CD4-positive, alpha-beta T cell (primary cell): ENCODE measurements at regions of chr14 and their contacts with region 1.

Region 1: DNA sequence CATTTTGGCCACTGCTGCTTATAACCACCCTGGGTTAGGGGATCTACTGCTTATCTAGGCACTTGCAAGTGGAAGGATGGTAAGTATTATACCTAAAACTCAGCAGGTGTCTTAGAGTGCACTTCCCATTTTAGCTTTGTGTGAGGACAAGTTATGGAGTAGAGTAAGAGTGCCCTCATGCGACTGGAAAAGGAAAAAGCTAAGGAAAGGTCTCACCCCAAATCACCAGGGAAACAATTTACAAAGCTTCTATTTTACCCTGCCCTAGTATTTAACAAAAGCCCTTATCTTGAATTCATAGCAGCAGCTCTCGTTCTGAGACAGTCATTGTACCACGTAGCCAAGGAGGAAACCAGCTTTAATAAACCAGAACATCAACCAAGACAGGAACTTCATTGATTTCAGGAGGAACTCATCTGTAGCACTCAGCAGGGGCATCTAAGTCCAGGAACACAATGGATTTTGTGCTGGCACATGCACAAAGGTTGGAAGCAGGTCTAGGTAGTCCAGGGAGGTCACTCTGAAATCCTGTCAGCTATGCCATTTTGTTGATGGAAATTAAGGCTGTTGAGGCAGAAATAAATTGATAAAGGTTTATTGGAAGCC is 2.9 kb downstream of the RDH12 start:
- DNase-seq: peak in 7 of 14 experiments; percentile 9 to 82 (median 45)
- ATAC-seq: peak; percentile 86
- H3K4me3 ChIP-seq: no peak overlapping the region
- H3K4me3 Mint-ChIP-seq: no peak overlapping the region
- H3K27ac ChIP-seq: no peak overlapping the region
- H3K27ac Mint-ChIP-seq: no peak overlapping the region
- H3K4me1 ChIP-seq: no peaks in the 10 kb centered on the region
- H3K4me1 Mint-ChIP-seq: no peaks in the 10 kb centered on the region
- H3K27me3 ChIP-seq: no peaks in the 10 kb centered on the region
- H3K27me3 Mint-ChIP-seq: peaks cover 3% of the 10 kb centered on the region
- CTCF ChIP-seq: peak; percentile 75

Region 2: GRCh38 chr14:67166450-67166853 is 538.1 kb before region 1 on chr14:
- CTCF ChIA-PET with region 1: no interaction called
- POLR2A ChIA-PET with region 1: no interaction called
- intact Hi-C with region 1: loop called in 1 of 2 experiments (anchors 10 kb)
- DNase-seq: peak in 8 of 14 experiments; percentile 11 to 62 (median 31)
- ATAC-seq: no peak
- H3K4me3 ChIP-seq: no peak overlapping the region
- H3K4me3 Mint-ChIP-seq: no peak overlapping the region
- H3K27ac ChIP-seq: no peak overlapping the region
- H3K27ac Mint-ChIP-seq: no peak overlapping the region
- H3K4me1 ChIP-seq: no peaks in the 10 kb centered on the region
- H3K4me1 Mint-ChIP-seq: no peaks in the 10 kb centered on the region
- H3K27me3 ChIP-seq: no peaks in the 10 kb centered on the region
- H3K27me3 Mint-ChIP-seq: no peaks in the 10 kb centered on the region
- CTCF ChIP-seq: peak; percentile 72

Region 3: DNA sequence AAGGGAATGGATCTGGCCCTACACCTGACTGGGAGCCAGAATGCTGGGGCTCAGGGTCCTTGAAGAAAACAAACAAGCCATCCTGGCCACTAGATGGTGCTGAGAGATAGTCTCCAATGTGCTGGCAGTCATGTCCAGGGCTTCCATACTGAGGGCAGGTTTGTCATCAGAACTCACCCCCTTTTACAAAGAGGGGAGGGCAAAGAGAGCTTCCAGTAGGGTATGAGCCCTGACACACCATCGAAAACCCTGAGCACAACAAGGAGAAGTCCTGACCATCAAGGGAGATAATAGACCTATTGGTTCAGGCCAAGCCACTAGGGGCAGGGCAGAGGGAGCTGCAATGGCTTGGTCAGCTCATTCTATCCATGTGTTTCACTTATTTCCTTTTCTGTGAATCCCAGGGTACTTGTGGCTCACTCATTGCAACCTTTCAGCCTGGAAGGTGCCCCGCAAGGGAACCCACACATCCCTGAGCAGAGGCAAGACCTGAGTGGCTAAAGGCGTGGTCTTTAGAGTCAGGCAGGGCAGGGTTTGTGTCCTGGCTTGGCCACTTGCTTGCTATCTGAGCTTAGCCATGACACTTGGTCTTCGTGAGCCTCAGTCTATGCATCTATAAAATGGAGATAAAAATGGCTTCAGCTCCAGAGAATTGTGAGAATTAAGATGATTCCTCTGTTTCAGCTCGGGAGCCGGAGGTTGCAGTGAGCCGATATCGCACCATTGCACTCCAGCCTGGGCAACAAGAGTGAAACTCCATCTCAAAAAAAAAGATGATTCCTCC is 177.7 kb before region 1 on chr14:
- CTCF ChIA-PET with region 1: no interaction called
- POLR2A ChIA-PET with region 1: no interaction called
- intact Hi-C with region 1: loop called in 1 of 2 experiments (anchors 2 kb)
- DNase-seq: peak in 9 of 14 experiments; percentile 10 to 68 (median 36)
- ATAC-seq: peak; percentile 70
- H3K4me3 ChIP-seq: no peak overlapping the region
- H3K4me3 Mint-ChIP-seq: no peak overlapping the region
- H3K27ac ChIP-seq: no peak overlapping the region
- H3K27ac Mint-ChIP-seq: no peak overlapping the region
- H3K4me1 ChIP-seq: peaks cover 5% of the 10 kb centered on the region
- H3K4me1 Mint-ChIP-seq: no peaks in the 10 kb centered on the region
- H3K27me3 ChIP-seq: peaks cover 13 to 23% of the 10 kb centered on the region in 2 experiments
- H3K27me3 Mint-ChIP-seq: peaks cover 44% of the 10 kb centered on the region
- CTCF ChIP-seq: peak; percentile 59

Region 4: DNA sequence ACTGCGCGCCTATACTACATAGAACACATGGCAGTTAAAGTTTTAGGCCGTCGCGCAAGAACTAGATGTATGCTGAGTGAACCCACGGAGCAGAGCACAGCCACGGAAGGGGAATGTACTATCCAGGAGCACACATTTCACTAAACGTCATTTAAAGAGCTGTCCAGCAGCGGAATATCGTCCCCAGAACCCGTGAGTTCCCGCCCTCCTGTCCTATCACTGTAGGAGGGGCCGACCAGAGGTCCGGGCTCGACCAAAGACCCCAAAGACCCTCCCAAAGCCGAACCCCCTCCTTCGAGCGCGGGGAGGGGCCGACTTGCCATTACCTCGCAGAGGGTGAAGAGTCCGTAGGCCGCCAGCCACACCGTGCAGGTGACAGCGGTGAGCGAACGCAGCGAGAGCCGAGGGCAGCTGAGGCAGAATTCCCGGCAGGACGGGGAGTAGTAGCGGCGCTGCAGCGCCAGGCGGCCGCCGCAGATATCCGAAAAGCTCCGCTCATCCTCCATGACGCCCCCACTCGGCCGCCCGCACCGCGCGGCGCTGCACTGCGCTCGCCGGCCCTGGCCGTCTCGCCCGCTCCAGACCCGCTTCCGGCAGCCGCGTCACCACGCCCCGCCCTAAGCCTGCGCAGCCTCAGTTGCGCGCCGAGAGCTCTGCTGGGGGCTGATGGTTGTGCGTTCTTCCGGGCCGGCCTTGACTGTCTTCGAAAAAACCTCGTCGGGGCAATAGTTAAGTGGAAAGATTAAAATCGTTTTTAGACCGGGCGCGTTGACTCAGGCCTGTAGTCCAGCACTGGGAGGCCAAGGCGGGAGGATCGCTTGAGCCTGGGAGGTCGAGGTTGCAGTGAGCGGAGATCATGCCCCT is 104.7 kb before region 1 on chr14 and contains the start of gene PIGH:
- CTCF ChIA-PET with region 1: interaction called, 18 read pairs
- POLR2A ChIA-PET with region 1: interaction called, 7 read pairs
- intact Hi-C with region 1: loop called in 1 of 2 experiments (anchors 5 kb)
- DNase-seq: peak; percentile 87 to 97 (median 94)
- ATAC-seq: peak; percentile 95
- H3K4me3 ChIP-seq: peak within 1 kb of the TSS; percentile 98
- H3K4me3 Mint-ChIP-seq: peak within 1 kb of the TSS; percentile 92
- H3K27ac ChIP-seq: peak within 1 kb of the TSS; percentile 56 to 83
- H3K27ac Mint-ChIP-seq: peak within 1 kb of the TSS; percentile 82
- H3K4me1 ChIP-seq: peaks cover 24% of the 10 kb centered on the region
- H3K4me1 Mint-ChIP-seq: peaks cover 49% of the 10 kb centered on the region
- H3K27me3 ChIP-seq: no peaks in the 10 kb centered on the region
- H3K27me3 Mint-ChIP-seq: no peaks in the 10 kb centered on the region
- CTCF ChIP-seq: peak; percentile 75
- total RNA-seq, gene PIGH: 66.0 to 69.7 TPM

Region 5: GRCh38 chr14:67666750-67667449 is 37.7 kb before region 1 on chr14:
- CTCF ChIA-PET with region 1: interaction called, 6 read pairs
- POLR2A ChIA-PET with region 1: no interaction called
- intact Hi-C with region 1: loop called in 1 of 2 experiments (anchors 5 kb)
- DNase-seq: peak in 9 of 14 experiments; percentile 2 to 78 (median 19)
- ATAC-seq: peak; percentile 94
- H3K4me3 ChIP-seq: no peak overlapping the region
- H3K4me3 Mint-ChIP-seq: no peak overlapping the region
- H3K27ac ChIP-seq: no peak overlapping the region
- H3K27ac Mint-ChIP-seq: peak overlapping the region; percentile 54
- H3K4me1 ChIP-seq: peaks cover 19% of the 10 kb centered on the region
- H3K4me1 Mint-ChIP-seq: peaks cover 63% of the 10 kb centered on the region
- H3K27me3 ChIP-seq: no peaks in the 10 kb centered on the region
- H3K27me3 Mint-ChIP-seq: no peaks in the 10 kb centered on the region
- CTCF ChIP-seq: peak; percentile 67

Region 6: DNA sequence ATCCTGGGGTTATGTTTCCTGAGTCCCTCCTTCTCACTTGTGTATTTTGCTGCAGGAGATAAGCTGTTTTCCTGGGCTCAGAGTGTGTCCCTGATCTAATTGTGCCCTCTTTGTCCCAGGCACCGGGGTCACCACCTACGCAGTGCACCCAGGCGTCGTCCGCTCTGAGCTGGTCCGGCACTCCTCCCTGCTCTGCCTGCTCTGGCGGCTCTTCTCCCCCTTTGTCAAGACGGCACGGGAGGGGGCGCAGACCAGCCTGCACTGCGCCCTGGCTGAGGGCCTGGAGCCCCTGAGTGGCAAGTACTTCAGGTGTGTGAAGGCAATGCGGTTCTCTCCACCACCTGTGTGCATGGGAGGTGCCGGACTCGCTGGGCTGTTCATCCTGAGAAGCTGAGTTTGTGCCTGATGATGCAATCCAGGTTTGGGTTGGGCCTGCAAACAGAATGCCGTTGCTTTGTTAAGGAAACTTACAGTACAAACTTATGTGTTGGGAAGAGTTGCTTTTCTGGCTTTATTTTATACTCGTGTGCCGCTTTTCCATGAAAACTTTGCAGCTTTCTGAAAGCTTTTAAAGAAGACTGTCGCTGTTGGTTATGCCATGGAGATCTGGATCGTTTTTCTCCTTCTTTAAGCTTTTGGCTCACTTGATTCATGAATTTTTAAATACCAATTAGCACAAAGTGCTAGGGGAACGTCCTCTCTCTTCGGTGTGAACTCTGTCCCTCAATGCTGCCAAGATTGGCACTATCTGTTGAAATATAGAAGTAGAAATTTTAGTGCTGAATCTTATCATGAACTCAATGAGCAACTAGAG is 24.7 kb after region 1 on chr14:
- CTCF ChIA-PET with region 1: no interaction called
- POLR2A ChIA-PET with region 1: no interaction called
- intact Hi-C with region 1: no loop called
- DNase-seq: no peak
- ATAC-seq: no peak
- H3K4me3 ChIP-seq: no peak overlapping the region
- H3K4me3 Mint-ChIP-seq: no peak overlapping the region
- H3K27ac ChIP-seq: no peak overlapping the region
- H3K27ac Mint-ChIP-seq: no peak overlapping the region
- H3K4me1 ChIP-seq: no peaks in the 10 kb centered on the region
- H3K4me1 Mint-ChIP-seq: no peaks in the 10 kb centered on the region
- H3K27me3 ChIP-seq: peaks cover 7 to 8% of the 10 kb centered on the region in 2 experiments
- H3K27me3 Mint-ChIP-seq: peaks cover 17% of the 10 kb centered on the region
- CTCF ChIP-seq: no peak

Region 7: DNA sequence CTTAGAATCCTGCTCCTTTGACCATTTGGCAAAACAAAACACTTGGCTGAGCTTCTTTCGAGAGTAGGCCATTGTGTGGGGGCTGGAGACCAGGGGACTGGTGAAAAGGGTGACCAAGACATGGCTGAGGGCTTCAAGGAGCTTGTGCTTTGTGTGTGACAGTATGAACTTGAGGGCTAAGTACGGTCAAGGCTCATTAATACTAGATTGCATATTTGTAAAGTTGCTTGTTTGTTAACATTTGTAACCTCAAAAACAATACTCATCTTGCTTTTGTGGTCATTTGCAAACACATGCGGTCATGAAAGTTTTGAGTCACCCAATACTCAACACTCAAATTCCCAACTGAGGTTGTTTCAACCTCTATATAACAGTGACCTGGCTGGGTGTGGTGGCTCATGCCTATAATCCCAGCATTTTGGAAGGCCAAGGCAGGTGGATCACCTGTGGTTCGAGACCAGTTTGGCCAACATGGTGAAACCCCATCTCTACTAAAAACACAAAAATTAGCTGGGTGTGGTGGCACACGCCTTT is 69.3 kb after region 1 on chr14:
- CTCF ChIA-PET with region 1: no interaction called
- POLR2A ChIA-PET with region 1: no interaction called
- intact Hi-C with region 1: no loop called
- DNase-seq: no peak
- ATAC-seq: no peak
- H3K4me3 ChIP-seq: no peak overlapping the region
- H3K4me3 Mint-ChIP-seq: no peak overlapping the region
- H3K27ac ChIP-seq: no peak overlapping the region
- H3K27ac Mint-ChIP-seq: no peak overlapping the region
- H3K4me1 ChIP-seq: no peaks in the 10 kb centered on the region
- H3K4me1 Mint-ChIP-seq: no peaks in the 10 kb centered on the region
- H3K27me3 ChIP-seq: no peaks in the 10 kb centered on the region
- H3K27me3 Mint-ChIP-seq: no peaks in the 10 kb centered on the region
- CTCF ChIP-seq: no peak

Region 8: DNA sequence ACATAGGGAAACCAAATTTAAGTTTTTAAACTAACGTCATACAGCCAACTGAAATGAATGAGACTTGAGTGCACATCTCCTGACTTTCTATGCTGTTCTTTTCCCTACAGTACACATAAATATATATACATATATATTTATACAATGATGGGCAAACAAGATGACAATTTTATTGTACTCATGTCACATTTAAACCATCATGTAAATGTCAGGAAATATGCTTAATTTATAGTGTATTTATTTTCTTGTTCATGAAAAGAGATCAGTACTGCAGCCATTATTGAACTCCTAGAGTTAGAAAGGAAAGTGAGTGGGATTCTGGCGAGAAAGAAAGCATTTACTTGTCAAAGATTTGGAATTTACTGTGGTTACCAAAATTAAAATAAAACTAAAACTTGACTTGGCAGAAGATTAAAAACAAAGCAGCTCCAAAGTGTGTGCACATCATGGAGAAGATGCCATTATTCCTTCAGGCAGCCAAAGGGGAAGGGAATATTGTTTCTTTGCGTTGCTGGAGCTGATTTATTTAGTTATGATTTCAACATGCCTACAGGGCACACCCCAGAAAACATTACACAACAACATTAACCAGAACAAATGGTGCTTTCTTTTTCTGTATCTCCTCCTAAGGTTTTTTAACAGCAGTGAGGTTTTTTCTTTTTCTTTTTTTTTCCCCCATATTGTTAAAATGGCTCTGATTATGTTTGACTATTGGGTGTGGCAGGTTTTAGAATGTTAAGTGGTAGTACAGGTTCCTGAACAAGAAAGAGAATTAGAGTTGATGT is 259.6 kb after region 1 on chr14:
- CTCF ChIA-PET with region 1: no interaction called
- POLR2A ChIA-PET with region 1: no interaction called
- intact Hi-C with region 1: no loop called
- DNase-seq: no peak
- ATAC-seq: no peak
- H3K4me3 ChIP-seq: no peak overlapping the region
- H3K4me3 Mint-ChIP-seq: no peak overlapping the region
- H3K27ac ChIP-seq: no peak overlapping the region
- H3K27ac Mint-ChIP-seq: no peak overlapping the region
- H3K4me1 ChIP-seq: no peaks in the 10 kb centered on the region
- H3K4me1 Mint-ChIP-seq: no peaks in the 10 kb centered on the region
- H3K27me3 ChIP-seq: no peaks in the 10 kb centered on the region
- H3K27me3 Mint-ChIP-seq: no peaks in the 10 kb centered on the region
- CTCF ChIP-seq: no peak